Posterior cingulate gyrus (tissue), 11 donors: ENCODE measurements at regions of chr5 and their contacts with region 1.

Region 1: GRCh38 chr5:179858586-179859427 is at the start of gene MRNIP:
- DNase-seq: peak; percentile 94 to 100 (median 98)

Region 2: DNA sequence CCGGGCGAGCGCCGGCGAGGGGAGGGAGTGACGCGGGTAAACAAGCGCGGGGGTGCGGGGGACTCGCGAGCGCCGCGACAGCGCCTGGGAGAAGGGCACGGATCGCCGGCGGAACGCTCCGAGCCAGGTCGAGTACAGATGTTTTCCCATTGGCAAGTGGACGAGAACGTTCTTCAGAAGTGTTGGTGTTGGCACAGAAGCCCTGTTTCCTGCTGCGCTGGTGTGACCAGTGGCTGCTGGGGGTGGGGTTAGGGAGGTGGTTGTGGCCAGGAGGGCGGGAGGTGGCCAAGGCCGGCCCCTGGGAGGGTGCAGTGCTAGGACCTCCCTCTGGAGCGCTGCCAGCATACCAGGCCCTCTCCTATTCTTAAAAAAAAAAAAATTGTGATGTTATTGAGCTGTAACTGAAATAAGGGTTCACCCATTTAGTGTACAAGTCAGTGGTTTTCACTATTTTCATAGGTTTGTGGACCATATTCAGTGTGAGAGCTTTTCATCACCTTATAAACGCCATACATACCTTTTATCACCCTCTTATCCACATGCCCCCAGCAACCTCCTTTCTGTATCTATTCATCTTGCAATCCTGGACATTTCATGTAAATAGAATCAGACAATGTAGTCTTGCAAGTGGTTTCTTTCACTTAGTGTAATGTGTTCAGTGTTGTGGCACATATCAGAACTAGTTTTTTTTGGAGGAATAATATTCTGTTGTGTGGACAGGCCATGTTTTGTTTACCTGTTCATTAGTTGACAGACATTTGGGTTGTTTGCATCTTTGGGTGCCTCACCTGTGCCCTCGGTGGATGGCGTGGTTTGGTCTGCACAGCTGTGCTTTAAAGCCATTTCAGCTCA is 37.0 kb before region 1 on chr5:
- intact Hi-C with region 1: loop called (anchors 5 kb)
- DNase-seq: peak; percentile 83 to 98 (median 89)